H1 (cell line): ENCODE measurements at regions of chr7 and their contacts with region 1.

Region 1: GRCh38 chr7:8724080-8724718 is 290.8 kb downstream of the NXPH1 start:
- DNase-seq: peak; percentile 21 to 72
- H3K4me3 ChIP-seq: no peak overlapping the region
- H3K27ac ChIP-seq: no peak overlapping the region
- H3K4me1 ChIP-seq: no peaks in the 10 kb centered on the region
- H3K27me3 ChIP-seq: no peaks in the 10 kb centered on the region
- CTCF ChIP-seq: peak; percentile 41 to 88 (median 78)
- EP300 ChIP-seq: no peak
- POLR2A ChIP-seq: no peak
- RAD21 ChIP-seq: peak; percentile 86 to 93

Region 2: GRCh38 chr7:8175929-8176369 is 548.2 kb before region 1 on chr7:
- CTCF ChIA-PET with region 1: no interaction called
- POLR2A ChIA-PET with region 1: no interaction called
- DNase-seq: no peak
- H3K4me3 ChIP-seq: no peak overlapping the region
- H3K27ac ChIP-seq: no peak overlapping the region
- H3K4me1 ChIP-seq: peaks cover 0 to 12% (median 2%) of the 10 kb centered on the region in 4 experiments; a peak in 4 of 7 replicates
- H3K27me3 ChIP-seq: no peaks in the 10 kb centered on the region
- CTCF ChIP-seq: no peak
- EP300 ChIP-seq: no peak
- POLR2A ChIP-seq: no peak
- RAD21 ChIP-seq: no peak

Region 3: DNA sequence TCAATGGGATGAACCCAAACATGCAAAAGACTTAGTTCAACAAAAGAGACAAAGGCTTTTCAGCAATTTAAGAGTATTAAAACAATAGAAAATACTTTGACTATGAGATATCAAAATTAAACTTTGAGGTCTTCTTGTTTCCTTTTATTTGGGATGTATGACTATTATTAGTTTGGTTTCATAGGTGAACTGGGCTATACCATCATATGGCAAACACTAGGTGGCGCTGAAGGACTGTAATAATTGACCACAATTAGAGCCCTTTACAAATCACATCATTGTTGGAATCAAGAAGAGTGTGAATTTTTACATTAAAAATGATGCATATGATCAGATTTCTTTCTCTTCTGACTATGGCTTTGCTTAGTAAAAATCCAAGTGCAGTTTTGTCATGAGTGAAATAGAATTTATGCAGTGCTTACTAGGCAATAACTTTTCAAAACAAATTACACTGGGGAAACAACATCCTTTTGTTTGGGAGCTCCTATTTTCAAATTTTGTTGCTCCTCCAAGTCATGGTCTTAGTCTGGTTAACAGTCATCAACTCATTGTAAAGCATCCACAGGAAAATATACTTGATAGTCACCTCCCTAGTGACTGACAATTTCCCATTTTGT is 305.5 kb before region 1 on chr7:
- CTCF ChIA-PET with region 1: interaction called, 11 read pairs
- POLR2A ChIA-PET with region 1: no interaction called
- DNase-seq: peak in 1 of 2 experiments; percentile 67
- H3K4me3 ChIP-seq: no peak overlapping the region
- H3K27ac ChIP-seq: no peak overlapping the region
- H3K4me1 ChIP-seq: no peaks in the 10 kb centered on the region
- H3K27me3 ChIP-seq: no peaks in the 10 kb centered on the region
- CTCF ChIP-seq: peak in 2 of 3 experiments; percentile 53 to 62; a peak in 3 of 4 replicates
- EP300 ChIP-seq: no peak
- POLR2A ChIP-seq: no peak
- RAD21 ChIP-seq: peak; percentile 78 to 86

Region 4: GRCh38 chr7:8436965-8437364 is 287.2 kb before region 1 on chr7:
- CTCF ChIA-PET with region 1: interaction called, 38 read pairs
- POLR2A ChIA-PET with region 1: no interaction called
- DNase-seq: peak in 1 of 2 experiments; percentile 93
- H3K4me3 ChIP-seq: peak overlapping the region in 2 of 4 experiments; percentile 26 to 70; a peak in 4 of 8 replicates
- H3K27ac ChIP-seq: no peak overlapping the region
- H3K4me1 ChIP-seq: peaks cover 2 to 29% (median 12%) of the 10 kb centered on the region in 4 experiments; a peak in 6 of 7 replicates
- H3K27me3 ChIP-seq: peaks cover 67 to 95% (median 90%) of the 10 kb centered on the region in 4 experiments
- CTCF ChIP-seq: peak; percentile 91 to 98 (median 96)
- EP300 ChIP-seq: no peak
- POLR2A ChIP-seq: no peak
- RAD21 ChIP-seq: peak; percentile 92 to 95

Region 5: GRCh38 chr7:8442814-8443313 is 281.3 kb before region 1 on chr7:
- CTCF ChIA-PET with region 1: interaction called, 38 read pairs
- POLR2A ChIA-PET with region 1: no interaction called
- DNase-seq: peak in 1 of 2 experiments; percentile 97
- H3K4me3 ChIP-seq: peak overlapping the region; percentile 42 to 74 (median 70)
- H3K27ac ChIP-seq: no peak overlapping the region
- H3K4me1 ChIP-seq: peaks cover 0 to 17% (median 6%) of the 10 kb centered on the region in 4 experiments
- H3K27me3 ChIP-seq: peaks cover 29 to 59% (median 57%) of the 10 kb centered on the region in 4 experiments
- CTCF ChIP-seq: no peak
- EP300 ChIP-seq: no peak
- POLR2A ChIP-seq: no peak
- RAD21 ChIP-seq: no peak

Region 6: GRCh38 chr7:8549046-8549445 is 175.2 kb before region 1 on chr7:
- CTCF ChIA-PET with region 1: no interaction called
- POLR2A ChIA-PET with region 1: no interaction called
- DNase-seq: no peak
- H3K4me3 ChIP-seq: no peak overlapping the region
- H3K27ac ChIP-seq: no peak overlapping the region
- H3K4me1 ChIP-seq: no peaks in the 10 kb centered on the region
- H3K27me3 ChIP-seq: no peaks in the 10 kb centered on the region
- CTCF ChIP-seq: no peak
- EP300 ChIP-seq: no peak
- POLR2A ChIP-seq: no peak
- RAD21 ChIP-seq: no peak

Region 7: GRCh38 chr7:8739837-8740236 is 15.6 kb after region 1 on chr7:
- CTCF ChIA-PET with region 1: interaction called, 17 read pairs
- POLR2A ChIA-PET with region 1: no interaction called
- DNase-seq: no peak
- H3K4me3 ChIP-seq: no peak overlapping the region
- H3K27ac ChIP-seq: no peak overlapping the region
- H3K4me1 ChIP-seq: no peaks in the 10 kb centered on the region
- H3K27me3 ChIP-seq: no peaks in the 10 kb centered on the region
- CTCF ChIP-seq: no peak
- EP300 ChIP-seq: no peak
- POLR2A ChIP-seq: no peak
- RAD21 ChIP-seq: no peak